ENCODE measurements at regions of chr1 and their contacts with region 1.

Region 1: GRCh38 chr1:227895828-227896685 is 51.7 kb downstream of the WNT9A start:
- DNase-seq: peak in 1 of 2 experiments; percentile 91
- H3K4me3 ChIP-seq: no peak overlapping the region
- H3K27ac ChIP-seq: no peak overlapping the region
- H3K4me1 ChIP-seq: no peaks in the 10 kb centered on the region
- H3K27me3 ChIP-seq: no peaks in the 10 kb centered on the region
- CTCF ChIP-seq: no peak

Region 2: GRCh38 chr1:227787513-227788270 is 108.4 kb before region 1 on chr1:
- CTCF ChIA-PET with region 1: interaction called, 3 read pairs
- POLR2A ChIA-PET with region 1: interaction called, 4 read pairs
- intact Hi-C with region 1: loop called (anchors 1 kb)
- DNase-seq: peak; percentile 81 to 98
- H3K4me3 ChIP-seq: peak overlapping the region; percentile 57
- H3K27ac ChIP-seq: no peak overlapping the region
- H3K4me1 ChIP-seq: peaks cover 6% of the 10 kb centered on the region; the same call in 1 of the 2 replicates
- H3K27me3 ChIP-seq: no peaks in the 10 kb centered on the region
- CTCF ChIP-seq: no peak

Region 3: GRCh38 chr1:227805606-227806197 is 90.4 kb before region 1 on chr1:
- CTCF ChIA-PET with region 1: no interaction called
- POLR2A ChIA-PET with region 1: interaction called, 4 read pairs
- intact Hi-C with region 1: loop called (anchors 1 kb)
- DNase-seq: peak; percentile 82 to 94
- H3K4me3 ChIP-seq: no peak overlapping the region
- H3K27ac ChIP-seq: peak overlapping the region; percentile 45
- H3K4me1 ChIP-seq: peaks cover 20% of the 10 kb centered on the region
- H3K27me3 ChIP-seq: no peaks in the 10 kb centered on the region
- CTCF ChIP-seq: no peak

Region 4: DNA sequence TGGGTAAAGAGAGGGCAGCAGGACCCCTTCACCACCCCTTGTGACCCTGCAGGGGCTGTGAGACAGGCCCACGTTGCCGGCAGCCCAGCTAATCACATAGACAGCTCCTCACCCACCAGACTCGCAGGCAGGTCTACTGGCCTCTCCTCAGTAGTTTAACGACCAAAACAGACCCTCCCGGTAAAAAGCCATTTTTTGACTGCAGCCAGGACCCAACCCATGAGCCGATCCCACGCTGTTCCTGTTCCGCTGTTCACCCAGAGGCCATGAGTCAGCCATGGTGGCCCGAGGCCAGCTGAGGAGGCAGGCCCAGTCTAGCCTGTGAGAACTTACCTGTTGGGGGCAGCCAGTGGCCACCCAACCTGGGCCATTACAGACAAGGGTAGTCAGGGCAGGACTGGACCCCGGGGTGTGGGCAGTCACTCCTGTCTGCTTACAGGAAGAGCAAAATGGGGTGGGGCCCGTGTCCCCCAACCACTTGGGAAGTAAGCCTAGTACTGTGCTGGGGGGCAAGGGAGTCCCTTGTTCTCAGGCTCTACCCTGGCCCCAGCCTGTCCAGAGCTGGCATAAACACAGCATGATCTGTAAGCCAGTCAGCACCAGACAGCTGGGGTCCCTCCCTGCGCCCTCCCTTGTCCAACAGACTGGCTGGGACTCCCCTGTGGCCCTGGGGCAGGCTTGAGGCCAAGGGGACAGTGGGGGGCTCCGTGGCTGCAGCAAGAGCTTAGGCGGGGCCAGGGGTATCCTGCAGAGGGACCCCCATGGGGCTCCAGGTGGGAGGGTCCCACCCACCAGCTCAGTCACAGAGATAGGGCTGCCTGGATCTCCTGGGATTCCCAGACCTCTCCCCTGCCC is 10.2 kb before region 1 on chr1:
- CTCF ChIA-PET with region 1: no interaction called
- POLR2A ChIA-PET with region 1: no interaction called
- intact Hi-C with region 1: loop called (anchors 1 kb)
- DNase-seq: peak; percentile 67 to 86
- H3K4me3 ChIP-seq: no peak overlapping the region
- H3K27ac ChIP-seq: no peak overlapping the region
- H3K4me1 ChIP-seq: 0 out of 2 replicates have a peak, but pooled peaks cover 7% of the 10 kb centered on the region
- H3K27me3 ChIP-seq: no peaks in the 10 kb centered on the region
- CTCF ChIP-seq: no peak

Region 5: GRCh38 chr1:227913764-227914721 is 18.0 kb after region 1 on chr1:
- CTCF ChIA-PET with region 1: no interaction called
- POLR2A ChIA-PET with region 1: interaction called, 4 read pairs
- intact Hi-C with region 1: loop called (anchors 2 kb)
- DNase-seq: no peak
- H3K4me3 ChIP-seq: no peak overlapping the region
- H3K27ac ChIP-seq: no peak overlapping the region
- H3K4me1 ChIP-seq: no peaks in the 10 kb centered on the region
- H3K27me3 ChIP-seq: no peaks in the 10 kb centered on the region
- CTCF ChIP-seq: no peak